Endothelial cell of umbilical vein (primary cell): ENCODE measurements at regions of chr12 and their contacts with region 1.

Region 1: DNA sequence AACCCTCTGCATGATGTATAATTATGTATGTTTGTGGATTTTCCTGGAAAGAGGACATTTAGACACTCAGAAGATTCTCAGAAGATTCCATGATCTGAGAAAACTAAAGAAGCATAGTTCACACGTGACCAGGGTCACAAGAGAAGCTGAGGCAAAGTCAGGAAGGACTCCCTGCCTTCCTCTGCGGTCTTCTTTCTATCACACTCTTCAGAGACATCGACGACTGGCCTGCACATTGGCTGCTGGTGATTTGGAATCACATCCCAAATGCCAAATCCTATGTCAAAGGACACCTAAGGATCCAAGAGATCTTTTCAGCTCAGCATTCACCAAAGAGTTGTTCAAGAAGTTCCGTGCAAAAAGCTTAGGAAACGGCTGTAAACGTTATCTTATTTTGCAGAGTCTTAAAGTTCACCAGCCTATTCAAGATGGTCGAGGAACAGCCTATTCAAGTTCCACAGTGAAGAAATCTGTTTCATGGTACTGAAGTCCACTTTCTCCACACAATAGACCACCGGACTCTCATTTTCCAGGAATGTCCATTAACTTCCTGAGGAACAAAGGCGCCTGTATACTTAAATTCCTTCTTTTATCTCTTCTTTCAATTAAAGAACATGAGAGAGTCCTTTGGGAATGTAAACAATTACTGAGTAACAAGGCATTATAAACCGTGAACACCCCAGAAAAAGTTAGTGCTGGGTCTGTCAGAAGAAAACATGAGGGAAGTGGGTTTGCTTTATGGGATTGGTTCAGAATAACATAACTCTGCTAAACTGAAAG is 42.1 kb downstream of the IGF1 start:
- DNase-seq: peak; percentile 42
- H3K4me3 ChIP-seq: no peak overlapping the region
- H3K27ac ChIP-seq: peak overlapping the region; percentile 90
- H3K4me1 ChIP-seq: peaks cover 30% of the 10 kb centered on the region
- H3K27me3 ChIP-seq: no peaks in the 10 kb centered on the region
- CTCF ChIP-seq: no peak
- POLR2A ChIP-seq: no peak

Region 2: GRCh38 chr12:101819467-101819866 is 618.8 kb before region 1 on chr12:
- CTCF ChIA-PET with region 1: no interaction called
- POLR2A ChIA-PET with region 1: no interaction called
- dilution Hi-C with region 1: no loop called
- intact Hi-C with region 1: no loop called
- DNase-seq: no peak
- H3K4me3 ChIP-seq: no peak overlapping the region
- H3K27ac ChIP-seq: no peak overlapping the region
- H3K4me1 ChIP-seq: peaks cover 5% of the 10 kb centered on the region
- H3K27me3 ChIP-seq: no peaks in the 10 kb centered on the region
- CTCF ChIP-seq: no peak
- POLR2A ChIP-seq: no peak

Region 3: DNA sequence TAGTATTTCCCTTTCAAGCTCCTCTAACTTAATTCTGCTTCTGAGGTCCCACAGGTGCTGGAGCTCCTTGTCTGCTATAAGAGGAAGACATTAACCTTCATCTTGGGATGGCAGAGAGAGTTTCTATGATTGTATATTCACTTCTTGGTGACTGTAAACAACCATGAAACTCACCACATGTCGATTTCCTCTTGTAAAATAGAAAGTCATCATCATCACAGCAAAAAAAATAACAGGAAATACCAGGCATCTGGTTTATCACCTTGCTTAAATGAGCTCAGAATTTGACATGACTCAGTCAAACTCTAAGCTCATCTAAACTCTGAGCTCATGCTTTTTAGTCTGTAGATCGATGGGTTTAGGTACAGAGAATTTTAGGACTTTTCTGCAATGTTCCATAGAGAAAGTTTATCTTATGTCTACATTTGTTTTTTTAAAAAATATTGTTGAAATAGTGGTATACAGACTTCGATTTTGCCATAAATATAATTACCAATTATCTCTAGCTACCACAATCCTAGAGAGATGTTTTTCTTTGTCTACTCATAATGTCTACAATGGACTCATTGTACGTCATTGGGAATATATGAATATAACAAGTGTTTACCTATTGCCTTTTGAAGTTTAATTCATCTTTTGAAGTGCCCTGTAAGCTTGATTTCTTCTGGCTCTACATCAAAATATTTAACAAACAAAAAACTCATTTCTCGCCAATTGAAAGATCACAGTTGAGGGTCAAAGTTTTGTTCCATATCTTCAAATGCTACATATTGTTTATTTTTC is 16.2 kb before region 1 on chr12:
- CTCF ChIA-PET with region 1: no interaction called
- POLR2A ChIA-PET with region 1: no interaction called
- dilution Hi-C with region 1: no loop called
- intact Hi-C with region 1: loop called (anchors 1 kb)
- DNase-seq: peak; percentile 16
- H3K4me3 ChIP-seq: no peak overlapping the region
- H3K27ac ChIP-seq: peak overlapping the region; percentile 16
- H3K4me1 ChIP-seq: peaks cover 8% of the 10 kb centered on the region
- H3K27me3 ChIP-seq: no peaks in the 10 kb centered on the region
- CTCF ChIP-seq: no peak
- POLR2A ChIP-seq: no peak

Region 4: DNA sequence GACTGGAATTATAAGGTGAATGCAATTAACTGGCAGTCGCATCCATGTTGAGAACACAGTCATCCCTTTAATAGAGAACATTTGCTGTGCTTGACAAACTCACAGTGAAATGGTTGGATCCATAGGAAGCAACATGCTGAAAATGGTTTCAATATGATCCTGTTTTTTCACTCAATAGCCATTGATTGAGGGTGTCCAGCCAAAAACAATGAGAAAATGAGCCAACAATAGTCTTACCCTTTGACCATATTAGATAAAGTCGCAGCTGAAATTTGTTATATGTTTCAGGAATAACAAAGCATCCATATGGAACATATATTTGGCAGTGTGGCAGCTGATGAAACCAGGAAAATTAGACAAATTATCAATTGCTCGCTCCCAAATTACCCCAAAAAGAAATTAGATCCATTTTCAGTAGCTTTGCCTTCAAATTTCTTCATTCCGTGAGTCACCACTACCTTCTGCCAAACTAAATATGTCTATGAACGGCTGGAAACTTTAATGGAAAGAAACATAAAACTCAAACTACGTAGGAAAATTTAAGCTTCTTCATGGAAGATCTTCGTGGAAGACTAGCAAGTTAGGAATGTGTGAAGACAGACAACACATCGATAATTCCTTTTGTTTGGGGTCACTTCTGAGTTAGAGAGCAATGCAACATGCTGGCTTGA is 24.7 kb after region 1 on chr12:
- CTCF ChIA-PET with region 1: no interaction called
- POLR2A ChIA-PET with region 1: no interaction called
- dilution Hi-C with region 1: no loop called
- intact Hi-C with region 1: no loop called
- DNase-seq: peak; percentile 14
- H3K4me3 ChIP-seq: no peak overlapping the region
- H3K27ac ChIP-seq: no peak overlapping the region
- H3K4me1 ChIP-seq: no peaks in the 10 kb centered on the region
- H3K27me3 ChIP-seq: no peaks in the 10 kb centered on the region
- CTCF ChIP-seq: no peak
- POLR2A ChIP-seq: no peak